ENCODE measurements at regions of chr5 and their contacts with region 1.

Region 1: GRCh38 chr5:134411546-134412266 is at the start of gene CDKN2AIPNL:
- DNase-seq: peak; percentile 94
- H3K4me3 Mint-ChIP-seq: peak within 1 kb of the TSS; percentile 96
- H3K27ac Mint-ChIP-seq: peak within 1 kb of the TSS; percentile 88
- H3K4me1 Mint-ChIP-seq: peaks cover 34% of the 10 kb centered on the region
- H3K27me3 Mint-ChIP-seq: no peaks in the 10 kb centered on the region
- total RNA-seq, gene CDKN2AIPNL: 31.1 to 31.5 TPM

Region 2: DNA sequence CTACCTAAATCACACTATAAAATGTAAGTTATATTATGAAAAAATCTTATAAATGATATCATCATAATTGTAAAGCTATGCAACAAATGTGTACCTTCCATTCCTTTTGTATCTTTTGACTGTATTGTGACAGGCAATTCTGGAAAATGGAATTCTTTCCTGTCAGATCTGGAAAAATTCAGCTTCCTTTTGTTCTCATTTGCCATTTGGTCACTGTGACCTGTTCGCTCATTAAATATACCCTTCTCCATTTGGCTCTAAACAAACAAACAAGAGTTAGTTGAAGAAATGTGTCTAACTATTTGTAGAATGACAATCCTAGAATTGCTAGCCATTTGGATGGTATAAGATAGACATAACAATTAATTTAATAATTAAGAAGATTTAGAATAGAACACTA is 107.4 kb before region 1 on chr5:
- CTCF ChIA-PET with region 1: interaction called, 6 read pairs
- intact Hi-C with region 1: loop called (anchors 2 kb)
- DNase-seq: no peak
- H3K4me3 Mint-ChIP-seq: no peak overlapping the region
- H3K27ac Mint-ChIP-seq: no peak overlapping the region
- H3K4me1 Mint-ChIP-seq: peaks cover 6% of the 10 kb centered on the region
- H3K27me3 Mint-ChIP-seq: no peaks in the 10 kb centered on the region

Region 3: DNA sequence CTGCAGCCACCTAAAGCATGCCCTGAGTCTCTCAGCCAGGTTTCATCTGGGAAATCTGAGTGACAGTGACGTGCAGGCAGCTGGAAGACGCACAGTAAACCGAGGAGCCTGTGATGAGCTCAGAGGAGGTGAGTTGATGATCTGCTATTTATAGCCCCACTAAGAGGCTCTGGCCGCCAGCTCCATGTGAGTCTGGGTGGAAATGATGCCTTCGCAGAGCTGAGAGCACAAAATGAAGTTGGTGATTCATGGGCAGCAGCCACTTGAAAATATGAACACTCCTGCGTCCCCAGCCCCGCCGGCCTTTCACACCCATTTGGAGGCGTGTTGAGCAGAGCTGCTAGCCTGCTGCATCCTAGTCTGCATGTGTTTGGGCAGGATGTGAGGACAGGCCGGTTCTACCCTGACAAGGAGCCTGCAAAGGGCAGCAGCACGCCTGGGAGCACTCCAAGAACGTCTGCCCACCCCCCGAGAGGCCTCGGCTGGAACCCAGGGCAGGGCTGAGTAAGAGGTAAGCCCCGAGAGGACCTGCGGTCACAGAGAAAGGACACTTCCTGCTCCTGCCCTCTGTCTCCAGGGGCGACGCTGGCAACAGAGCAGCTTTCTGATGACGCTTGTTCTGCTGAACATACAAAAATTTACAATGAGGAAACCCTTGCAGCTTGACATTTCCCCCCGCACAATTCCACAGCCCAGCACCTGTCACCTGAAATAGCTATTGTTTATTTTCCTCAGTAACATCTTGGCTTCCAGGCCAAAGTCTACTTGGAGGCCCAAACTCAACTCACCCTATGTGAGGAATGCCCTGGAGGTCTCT is 25.0 kb after region 1 on chr5:
- CTCF ChIA-PET with region 1: interaction called, 4 read pairs
- intact Hi-C with region 1: loop called (anchors 2 kb)
- DNase-seq: peak; percentile 80
- H3K4me3 Mint-ChIP-seq: peak overlapping the region; percentile 25
- H3K27ac Mint-ChIP-seq: no peak overlapping the region
- H3K4me1 Mint-ChIP-seq: peaks cover 32% of the 10 kb centered on the region
- H3K27me3 Mint-ChIP-seq: no peaks in the 10 kb centered on the region

Region 4: GRCh38 chr5:134465816-134466240 is 54.1 kb after region 1 on chr5:
- CTCF ChIA-PET with region 1: interaction called, 4 read pairs
- intact Hi-C with region 1: loop called (anchors 1 kb)
- DNase-seq: peak; percentile 73
- H3K4me3 Mint-ChIP-seq: peak overlapping the region; percentile 81
- H3K27ac Mint-ChIP-seq: peak overlapping the region; percentile 81
- H3K4me1 Mint-ChIP-seq: peaks cover 19% of the 10 kb centered on the region
- H3K27me3 Mint-ChIP-seq: no peaks in the 10 kb centered on the region

Region 5: GRCh38 chr5:134503088-134503946 is 91.6 kb after region 1 on chr5:
- CTCF ChIA-PET with region 1: interaction called, 3 read pairs
- intact Hi-C with region 1: loop called (anchors 1 kb)
- DNase-seq: peak; percentile 91
- H3K4me3 Mint-ChIP-seq: peak overlapping the region; percentile 30
- H3K27ac Mint-ChIP-seq: peak overlapping the region; percentile 92
- H3K4me1 Mint-ChIP-seq: peaks cover 33% of the 10 kb centered on the region
- H3K27me3 Mint-ChIP-seq: no peaks in the 10 kb centered on the region

Region 6: GRCh38 chr5:134577796-134578363 is 166.2 kb after region 1 on chr5:
- CTCF ChIA-PET with region 1: interaction called, 12 read pairs
- intact Hi-C with region 1: loop called (anchors 2 kb)
- DNase-seq: peak; percentile 91
- H3K4me3 Mint-ChIP-seq: no peak overlapping the region
- H3K27ac Mint-ChIP-seq: peak overlapping the region; percentile 69
- H3K4me1 Mint-ChIP-seq: peaks cover 15% of the 10 kb centered on the region
- H3K27me3 Mint-ChIP-seq: no peaks in the 10 kb centered on the region

Region 7: DNA sequence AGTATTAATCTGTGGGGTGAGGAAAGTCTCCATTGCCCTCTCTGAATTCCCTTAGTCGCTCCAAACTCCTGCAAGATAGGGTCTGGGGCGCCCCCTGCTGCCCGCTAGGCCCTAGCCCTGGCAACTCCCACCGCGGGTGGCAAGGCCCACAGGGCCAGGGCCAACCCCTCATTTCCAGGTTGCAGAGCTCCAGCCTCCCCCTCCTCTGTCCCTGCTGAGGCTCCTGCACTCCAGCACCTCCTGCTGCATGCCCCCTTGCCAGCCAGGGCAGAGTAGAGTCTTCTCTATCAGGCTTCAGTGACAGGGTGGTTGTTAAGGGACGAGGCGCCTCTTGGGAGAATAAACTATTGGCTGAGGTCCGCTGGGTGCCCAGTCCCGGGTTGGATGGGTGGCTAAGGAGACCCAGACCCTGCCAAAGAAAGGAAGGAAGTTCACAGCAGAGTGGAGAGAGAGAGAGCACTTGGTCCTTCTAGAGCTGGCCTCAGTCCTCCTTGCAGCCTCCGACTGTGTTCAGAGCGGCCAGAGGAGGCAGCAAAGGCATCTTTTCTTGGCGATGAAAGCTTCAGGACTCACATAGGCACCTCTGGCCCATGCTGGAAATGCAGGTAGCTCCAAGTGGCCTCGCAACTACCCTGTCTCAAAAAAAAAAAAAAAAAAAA is 175.3 kb after region 1 on chr5:
- CTCF ChIA-PET with region 1: interaction called, 11 read pairs
- intact Hi-C with region 1: no loop called
- DNase-seq: peak; percentile 94
- H3K4me3 Mint-ChIP-seq: no peak overlapping the region
- H3K27ac Mint-ChIP-seq: no peak overlapping the region
- H3K4me1 Mint-ChIP-seq: peaks cover 13% of the 10 kb centered on the region
- H3K27me3 Mint-ChIP-seq: no peaks in the 10 kb centered on the region

Region 8: GRCh38 chr5:134659456-134659855 is 247.8 kb after region 1 on chr5:
- CTCF ChIA-PET with region 1: no interaction called
- intact Hi-C with region 1: no loop called
- DNase-seq: no peak
- H3K4me3 Mint-ChIP-seq: no peak overlapping the region
- H3K27ac Mint-ChIP-seq: no peak overlapping the region
- H3K4me1 Mint-ChIP-seq: peaks cover 32% of the 10 kb centered on the region
- H3K27me3 Mint-ChIP-seq: no peaks in the 10 kb centered on the region

Measured in activated naive CD4-positive, alpha-beta T cell treated with anti-CD3 and anti-CD28 coated beads for 36 hours (primary cell).